ENCODE measurements at regions of chr13 and their contacts with region 1.

Region 1: DNA sequence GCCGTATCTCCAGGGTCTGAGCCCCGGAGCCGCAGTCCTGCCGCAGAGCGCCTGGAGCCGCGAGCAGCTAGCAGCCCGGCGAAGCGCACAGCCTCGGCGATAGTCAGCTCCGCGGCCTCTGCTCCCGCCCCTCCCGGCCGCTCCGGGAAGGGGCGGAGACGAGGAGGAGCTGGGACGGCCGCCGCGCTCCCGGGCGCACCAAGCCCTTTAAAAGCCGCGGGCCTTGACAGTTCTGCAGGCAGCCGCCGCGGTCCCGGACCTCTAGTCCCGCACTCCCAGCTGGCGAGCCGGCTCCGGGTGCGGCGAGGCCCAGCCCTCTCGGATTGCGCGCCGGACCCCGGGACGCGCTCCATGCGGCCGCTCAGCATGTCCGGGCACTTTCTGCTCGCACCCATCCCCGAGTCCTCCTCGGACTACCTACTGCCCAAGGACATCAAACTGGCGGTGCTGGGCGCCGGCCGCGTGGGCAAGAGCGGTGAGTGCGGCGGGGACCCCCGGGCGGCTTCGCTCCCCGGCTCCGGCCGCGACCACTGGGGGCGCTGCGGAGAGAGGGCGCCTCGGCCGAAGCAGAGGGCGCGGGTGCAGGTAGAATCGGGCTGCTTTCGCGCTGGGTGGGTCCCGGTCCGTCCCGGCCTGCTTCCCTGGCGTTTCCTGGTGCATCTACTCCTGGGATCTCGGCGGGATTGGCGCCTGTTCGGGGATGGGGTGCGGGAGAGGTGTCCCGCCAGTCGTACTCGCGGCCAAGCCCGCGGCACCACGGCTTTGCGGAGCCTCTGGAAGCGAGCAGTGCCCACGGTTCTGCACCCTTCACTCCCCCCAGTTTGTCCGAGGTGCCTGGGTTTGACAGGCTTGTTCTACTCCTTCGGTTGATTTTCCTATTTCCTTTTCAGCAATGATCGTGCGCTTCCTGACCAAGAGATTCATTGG is at the start of gene RASL11A:
- DNase-seq: peak; percentile 70
- ATAC-seq: peak; percentile 94
- H3K4me3 ChIP-seq: peak within 1 kb of the TSS; percentile 53 to 84 (median 76)
- H3K27ac ChIP-seq: peak within 1 kb of the TSS; percentile 41
- H3K4me1 ChIP-seq: peaks cover 15% of the 10 kb centered on the region
- H3K27me3 ChIP-seq: no peaks in the 10 kb centered on the region
- CTCF ChIP-seq: peak; percentile 87
- EP300 ChIP-seq: no peak
- POLR2A ChIP-seq: peak; percentile 68 to 78
- RAD21 ChIP-seq: peak; percentile 62
- total RNA-seq, gene RASL11A: 3.2 and 4.1 TPM in 2 replicates

Region 2: DNA sequence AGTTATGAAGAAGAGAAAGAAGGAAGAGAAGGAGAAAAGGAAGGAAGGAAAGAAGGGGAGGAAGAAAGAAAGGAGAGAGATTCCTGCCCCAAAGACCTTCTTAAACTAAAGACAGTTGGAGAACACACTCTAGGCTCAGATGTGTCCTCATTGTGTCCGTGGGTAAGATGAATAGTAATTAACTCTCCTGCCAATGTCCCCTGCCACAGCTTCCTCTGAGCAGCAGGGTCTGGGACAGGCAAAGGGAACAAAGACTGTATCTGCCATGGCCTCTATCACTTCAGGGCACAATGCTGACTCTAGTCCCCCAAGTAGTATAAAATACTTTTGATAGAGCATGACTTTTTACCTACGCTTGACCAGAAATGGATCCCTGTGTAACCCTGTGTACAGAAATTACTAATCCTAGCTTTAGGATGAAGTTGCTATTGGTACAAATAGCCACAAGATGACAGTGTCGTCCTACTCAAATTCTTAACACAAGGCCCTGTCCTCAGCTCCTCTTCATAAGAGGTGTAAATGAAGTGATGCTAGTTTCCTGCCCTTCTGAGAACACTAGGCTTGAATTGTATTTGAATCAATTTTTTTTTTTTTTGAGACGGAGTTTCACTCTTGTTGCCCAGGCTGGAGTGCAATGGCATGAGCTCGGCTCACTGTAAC is 324.0 kb before region 1 on chr13:
- CTCF ChIA-PET with region 1: no interaction called
- POLR2A ChIA-PET with region 1: no interaction called
- in situ Hi-C with region 1: no loop called
- intact Hi-C with region 1: loop called (anchors 5 kb)
- DNase-seq: peak; percentile 64
- ATAC-seq: peak; percentile 80
- H3K4me3 ChIP-seq: no peak overlapping the region
- H3K27ac ChIP-seq: no peak overlapping the region
- H3K4me1 ChIP-seq: peaks cover 37% of the 10 kb centered on the region
- H3K27me3 ChIP-seq: no peaks in the 10 kb centered on the region
- CTCF ChIP-seq: peak; percentile 90
- EP300 ChIP-seq: no peak
- POLR2A ChIP-seq: no peak
- RAD21 ChIP-seq: peak; percentile 87

Region 3: DNA sequence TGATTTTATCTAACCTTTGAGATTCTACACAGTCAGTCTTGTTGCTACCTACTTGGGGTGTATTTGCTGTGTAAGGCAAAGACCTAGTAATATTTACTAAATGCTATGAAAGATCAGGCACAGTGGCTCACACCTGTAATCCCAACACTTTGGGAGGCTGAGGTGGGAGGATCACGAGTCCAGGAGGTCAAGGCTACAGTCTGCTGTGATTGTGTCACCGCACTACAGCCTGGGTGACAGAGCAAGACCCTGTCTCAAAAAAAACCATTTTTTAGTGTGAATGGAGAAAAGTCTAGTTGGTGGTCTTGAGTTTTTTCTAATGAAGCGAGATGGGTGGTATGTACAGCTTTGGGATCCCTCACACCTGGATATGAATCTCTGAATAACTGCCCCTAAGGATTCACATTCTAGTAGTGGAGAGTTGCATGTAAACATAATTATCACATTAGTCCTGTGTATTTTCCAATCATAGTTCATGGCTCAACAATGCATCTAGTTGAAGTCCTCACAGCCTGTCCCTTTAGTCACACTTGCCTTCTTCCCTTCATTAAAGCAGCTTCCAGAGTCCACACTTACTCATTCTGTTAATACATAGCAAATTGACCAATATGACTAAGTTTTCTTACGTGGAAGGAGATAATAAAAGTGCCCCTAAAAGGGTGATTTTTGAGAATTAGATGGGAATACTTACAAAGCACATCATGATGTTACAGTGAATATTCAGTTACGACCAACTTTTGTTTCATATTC is 12.0 kb before region 1 on chr13:
- CTCF ChIA-PET with region 1: no interaction called
- POLR2A ChIA-PET with region 1: interaction called, 10 read pairs
- in situ Hi-C with region 1: no loop called
- intact Hi-C with region 1: no loop called
- DNase-seq: no peak
- ATAC-seq: peak; percentile 11
- H3K4me3 ChIP-seq: no peak overlapping the region
- H3K27ac ChIP-seq: peak overlapping the region; percentile 35
- H3K4me1 ChIP-seq: peaks cover 44% of the 10 kb centered on the region
- H3K27me3 ChIP-seq: no peaks in the 10 kb centered on the region
- CTCF ChIP-seq: no peak
- EP300 ChIP-seq: no peak
- POLR2A ChIP-seq: peak in 1 of 2 experiments; percentile 21; a peak in 1 of 4 replicates
- RAD21 ChIP-seq: no peak

Region 4: GRCh38 chr13:27578121-27579030 is 307.5 kb after region 1 on chr13:
- CTCF ChIA-PET with region 1: no interaction called
- POLR2A ChIA-PET with region 1: no interaction called
- in situ Hi-C with region 1: no loop called
- intact Hi-C with region 1: no loop called
- DNase-seq: no peak
- ATAC-seq: peak; percentile 39; the same call in 1 of the 3 replicates
- H3K4me3 ChIP-seq: no peak overlapping the region
- H3K27ac ChIP-seq: no peak overlapping the region
- H3K4me1 ChIP-seq: peaks cover 20% of the 10 kb centered on the region
- H3K27me3 ChIP-seq: no peaks in the 10 kb centered on the region
- CTCF ChIP-seq: no peak
- EP300 ChIP-seq: no peak
- POLR2A ChIP-seq: no peak
- RAD21 ChIP-seq: no peak

Measured in HepG2 (cell line).